WTC11 (cell line): ENCODE measurements at regions of chr17 and their contacts with region 1.

Region 1: GRCh38 chr17:74659898-74660297 is 36.4 kb upstream of the CD300E start:
- DNase-seq: no peak
- ATAC-seq: no peak
- H3K4me3 Mint-ChIP-seq: no peak overlapping the region
- H3K27ac Mint-ChIP-seq: no peak overlapping the region
- H3K4me1 Mint-ChIP-seq: peaks cover 20% of the 10 kb centered on the region
- H3K27me3 Mint-ChIP-seq: no peaks in the 10 kb centered on the region; the same call in none of the 2 replicates
- CTCF ChIP-seq: no peak

Region 2: GRCh38 chr17:74566132-74566753 is 93.7 kb before region 1 on chr17:
- CTCF ChIA-PET with region 1: interaction called, 31 read pairs
- POLR2A ChIA-PET with region 1: no interaction called
- DNase-seq: peak; percentile 82
- ATAC-seq: peak; percentile 96
- H3K4me3 Mint-ChIP-seq: no peak overlapping the region
- H3K27ac Mint-ChIP-seq: no peak overlapping the region
- H3K4me1 Mint-ChIP-seq: peaks cover 7% of the 10 kb centered on the region; the same call in 1 of the 2 replicates
- H3K27me3 Mint-ChIP-seq: peaks cover 18% of the 10 kb centered on the region
- CTCF ChIP-seq: peak; percentile 77

Region 3: DNA sequence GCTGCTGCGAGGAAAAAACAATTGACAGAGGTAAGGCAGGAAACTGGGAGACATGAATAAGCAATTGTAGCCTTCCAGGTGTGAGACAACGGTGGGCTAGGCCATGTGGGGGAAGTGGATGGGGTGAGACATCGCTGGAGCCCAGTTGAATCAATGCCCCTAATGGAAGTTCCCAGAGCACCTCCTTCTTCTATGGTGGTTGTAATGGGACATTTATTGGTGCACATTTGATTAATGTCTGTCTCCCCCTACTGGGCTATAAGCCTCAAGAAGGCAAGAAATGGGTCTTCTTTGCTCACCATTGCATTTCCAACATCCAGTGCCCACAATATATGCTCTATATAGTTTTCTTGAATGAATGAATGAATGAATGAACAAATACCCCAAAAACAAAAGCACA is 13.7 kb before region 1 on chr17:
- CTCF ChIA-PET with region 1: interaction called, 21 read pairs
- POLR2A ChIA-PET with region 1: no interaction called
- DNase-seq: no peak
- ATAC-seq: peak; percentile 47
- H3K4me3 Mint-ChIP-seq: no peak overlapping the region
- H3K27ac Mint-ChIP-seq: no peak overlapping the region
- H3K4me1 Mint-ChIP-seq: peaks cover 22% of the 10 kb centered on the region
- H3K27me3 Mint-ChIP-seq: peaks cover 17% of the 10 kb centered on the region
- CTCF ChIP-seq: no peak

Region 4: GRCh38 chr17:74690409-74690825 is 30.5 kb after region 1 on chr17:
- CTCF ChIA-PET with region 1: interaction called, 10 read pairs
- POLR2A ChIA-PET with region 1: no interaction called
- DNase-seq: no peak
- ATAC-seq: no peak
- H3K4me3 Mint-ChIP-seq: no peak overlapping the region
- H3K27ac Mint-ChIP-seq: no peak overlapping the region
- H3K4me1 Mint-ChIP-seq: no peaks in the 10 kb centered on the region
- H3K27me3 Mint-ChIP-seq: peaks cover 22% of the 10 kb centered on the region
- CTCF ChIP-seq: no peak

Region 5: DNA sequence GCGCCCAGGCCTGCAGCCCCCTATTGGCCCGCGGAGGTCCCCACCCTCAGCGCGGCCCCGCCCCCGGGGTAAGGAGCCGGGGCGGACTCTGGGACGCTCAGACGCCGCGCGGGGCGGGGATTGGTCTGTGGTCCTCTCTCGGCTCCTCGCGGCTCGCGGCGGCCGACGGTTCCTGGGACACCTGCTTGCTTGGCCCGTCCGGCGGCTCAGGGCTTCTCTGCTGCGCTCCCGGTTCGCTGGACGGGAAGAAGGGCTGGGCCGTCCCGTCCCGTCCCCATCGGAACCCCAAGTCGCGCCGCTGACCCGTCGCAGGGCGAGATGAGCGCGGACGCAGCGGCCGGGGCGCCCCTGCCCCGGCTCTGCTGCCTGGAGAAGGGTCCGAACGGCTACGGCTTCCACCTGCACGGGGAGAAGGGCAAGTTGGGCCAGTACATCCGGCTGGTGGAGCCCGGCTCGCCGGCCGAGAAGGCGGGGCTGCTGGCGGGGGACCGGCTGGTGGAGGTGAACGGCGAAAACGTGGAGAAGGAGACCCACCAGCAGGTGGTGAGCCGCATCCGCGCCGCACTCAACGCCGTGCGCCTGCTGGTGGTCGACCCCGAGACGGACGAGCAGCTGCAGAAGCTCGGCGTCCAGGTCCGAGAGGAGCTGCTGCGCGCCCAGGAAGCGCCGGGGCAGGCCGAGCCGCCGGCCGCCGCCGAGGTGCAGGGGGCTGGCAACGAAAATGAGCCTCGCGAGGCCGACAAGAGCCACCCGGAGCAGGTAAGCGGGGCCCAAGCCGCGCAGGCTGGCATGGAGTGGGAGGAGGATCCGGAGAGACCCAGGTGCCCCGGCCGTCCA is 88.8 kb after region 1 on chr17 and contains the start of gene NHERF1:
- CTCF ChIA-PET with region 1: interaction called, 91 read pairs
- POLR2A ChIA-PET with region 1: interaction called, 4 read pairs
- DNase-seq: peak; percentile 61
- ATAC-seq: peak; percentile 86
- H3K4me3 Mint-ChIP-seq: peak within 1 kb of the TSS; percentile 92
- H3K27ac Mint-ChIP-seq: peak within 1 kb of the TSS; percentile 57
- H3K4me1 Mint-ChIP-seq: peaks cover 64% of the 10 kb centered on the region
- H3K27me3 Mint-ChIP-seq: peaks cover 3% of the 10 kb centered on the region; the same call in 1 of the 2 replicates
- CTCF ChIP-seq: no peak
- total RNA-seq, gene NHERF1: 86.9 to 111 TPM (median 97.1 TPM) in 3 replicates

Region 6: GRCh38 chr17:74776044-74776977 is 116.4 kb after region 1 on chr17 and contains the start of gene NAT9:
- CTCF ChIA-PET with region 1: interaction called, 28 read pairs
- POLR2A ChIA-PET with region 1: interaction called, 3 read pairs
- DNase-seq: peak; percentile 99
- ATAC-seq: peak; percentile 96
- H3K4me3 Mint-ChIP-seq: peak within 1 kb of the TSS; percentile 91
- H3K27ac Mint-ChIP-seq: peak within 1 kb of the TSS; percentile 97
- H3K4me1 Mint-ChIP-seq: peaks cover 15% of the 10 kb centered on the region
- H3K27me3 Mint-ChIP-seq: no peaks in the 10 kb centered on the region
- CTCF ChIP-seq: no peak
- total RNA-seq, gene NAT9: 66.0 to 71.2 TPM (median 67.1 TPM) in 3 replicates

Region 7: GRCh38 chr17:74873038-74873873 is 213.4 kb after region 1 on chr17:
- CTCF ChIA-PET with region 1: interaction called, 12 read pairs
- POLR2A ChIA-PET with region 1: no interaction called
- DNase-seq: peak; percentile 99
- ATAC-seq: peak; percentile 91
- H3K4me3 Mint-ChIP-seq: peak overlapping the region; percentile 81
- H3K27ac Mint-ChIP-seq: peak overlapping the region; percentile 98
- H3K4me1 Mint-ChIP-seq: peaks cover 22% of the 10 kb centered on the region
- H3K27me3 Mint-ChIP-seq: peaks cover 8% of the 10 kb centered on the region
- CTCF ChIP-seq: no peak